SK-N-SH (cell line): ENCODE measurements at regions of chr6 and their contacts with region 1.

Region 1: GRCh38 chr6:158213925-158214674 is 46.0 kb downstream of the GTF2H5 start:
- DNase-seq: peak; percentile 80
- H3K4me3 ChIP-seq: no peak overlapping the region; a peak in 1 of 4 replicates
- H3K27ac ChIP-seq: 0 out of 4 replicates have a peak overlapping the region, but pooled peaks of 1 of the 2 experiments have one; percentile 2
- H3K4me1 ChIP-seq: 0 out of 4 replicates have a peak, but pooled peaks cover 0 to 5% of the 10 kb centered on the region in 2 experiments
- H3K27me3 ChIP-seq: no peaks in the 10 kb centered on the region
- CTCF ChIP-seq: peak; percentile 80
- EP300 ChIP-seq: no peak
- RAD21 ChIP-seq: peak; percentile 91

Region 2: DNA sequence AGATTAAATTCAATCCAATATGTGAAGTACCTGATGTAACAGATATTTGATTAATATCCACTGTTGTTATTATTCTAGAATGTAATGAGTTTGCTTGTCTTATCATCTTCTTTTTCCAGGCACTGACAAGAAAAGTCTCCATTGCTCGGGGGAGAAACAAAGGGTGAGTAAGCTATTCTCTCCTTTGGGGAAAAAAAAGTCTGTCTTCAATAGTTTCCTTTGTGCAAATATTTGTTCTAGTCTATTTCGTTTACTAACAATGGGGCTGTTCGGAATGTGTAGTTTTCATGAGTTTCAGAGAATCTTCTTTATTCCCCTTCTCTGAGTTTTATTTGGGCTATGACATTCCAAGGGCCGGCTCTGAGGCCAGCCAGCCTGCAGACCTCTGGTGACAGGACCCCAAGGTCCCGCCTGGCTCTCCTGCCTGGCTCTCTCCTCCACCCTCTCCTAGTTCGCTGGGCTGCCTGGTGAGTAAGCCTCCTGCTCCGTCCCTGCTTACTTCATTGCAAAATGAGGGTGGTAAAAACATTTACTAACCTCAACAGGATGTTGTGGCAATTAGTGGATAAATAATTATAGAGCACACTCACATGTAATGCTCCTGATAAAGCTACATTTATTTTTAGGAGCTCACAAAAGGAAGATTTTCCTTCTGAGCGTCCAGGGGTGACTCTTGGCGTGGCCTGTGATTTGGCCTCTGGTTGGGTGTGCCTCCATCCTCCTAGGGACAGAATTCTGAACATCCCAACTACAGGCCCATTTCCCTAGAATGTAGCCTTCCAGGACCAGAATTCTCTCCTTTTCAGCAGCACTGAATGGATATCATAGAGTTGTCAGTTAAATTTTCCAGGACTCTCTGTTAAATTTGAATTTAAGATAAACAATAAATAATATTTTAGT is 434.1 kb before region 1 on chr6:
- CTCF ChIA-PET with region 1: no interaction called
- POLR2A ChIA-PET with region 1: no interaction called
- DNase-seq: no peak
- H3K4me3 ChIP-seq: no peak overlapping the region
- H3K27ac ChIP-seq: no peak overlapping the region
- H3K4me1 ChIP-seq: no peaks in the 10 kb centered on the region
- H3K27me3 ChIP-seq: no peaks in the 10 kb centered on the region
- CTCF ChIP-seq: no peak
- EP300 ChIP-seq: no peak
- RAD21 ChIP-seq: no peak

Region 3: GRCh38 chr6:158188591-158188990 is 25.5 kb before region 1 on chr6:
- CTCF ChIA-PET with region 1: interaction called, 14 read pairs
- POLR2A ChIA-PET with region 1: no interaction called
- DNase-seq: no peak
- H3K4me3 ChIP-seq: no peak overlapping the region
- H3K27ac ChIP-seq: no peak overlapping the region
- H3K4me1 ChIP-seq: no peaks in the 10 kb centered on the region
- H3K27me3 ChIP-seq: no peaks in the 10 kb centered on the region
- CTCF ChIP-seq: no peak
- EP300 ChIP-seq: no peak
- RAD21 ChIP-seq: no peak

Region 4: GRCh38 chr6:158198461-158198860 is 15.6 kb before region 1 on chr6:
- CTCF ChIA-PET with region 1: interaction called, 12 read pairs
- POLR2A ChIA-PET with region 1: no interaction called
- DNase-seq: no peak
- H3K4me3 ChIP-seq: no peak overlapping the region
- H3K27ac ChIP-seq: no peak overlapping the region
- H3K4me1 ChIP-seq: no peaks in the 10 kb centered on the region
- H3K27me3 ChIP-seq: no peaks in the 10 kb centered on the region
- CTCF ChIP-seq: no peak
- EP300 ChIP-seq: no peak
- RAD21 ChIP-seq: no peak

Region 5: DNA sequence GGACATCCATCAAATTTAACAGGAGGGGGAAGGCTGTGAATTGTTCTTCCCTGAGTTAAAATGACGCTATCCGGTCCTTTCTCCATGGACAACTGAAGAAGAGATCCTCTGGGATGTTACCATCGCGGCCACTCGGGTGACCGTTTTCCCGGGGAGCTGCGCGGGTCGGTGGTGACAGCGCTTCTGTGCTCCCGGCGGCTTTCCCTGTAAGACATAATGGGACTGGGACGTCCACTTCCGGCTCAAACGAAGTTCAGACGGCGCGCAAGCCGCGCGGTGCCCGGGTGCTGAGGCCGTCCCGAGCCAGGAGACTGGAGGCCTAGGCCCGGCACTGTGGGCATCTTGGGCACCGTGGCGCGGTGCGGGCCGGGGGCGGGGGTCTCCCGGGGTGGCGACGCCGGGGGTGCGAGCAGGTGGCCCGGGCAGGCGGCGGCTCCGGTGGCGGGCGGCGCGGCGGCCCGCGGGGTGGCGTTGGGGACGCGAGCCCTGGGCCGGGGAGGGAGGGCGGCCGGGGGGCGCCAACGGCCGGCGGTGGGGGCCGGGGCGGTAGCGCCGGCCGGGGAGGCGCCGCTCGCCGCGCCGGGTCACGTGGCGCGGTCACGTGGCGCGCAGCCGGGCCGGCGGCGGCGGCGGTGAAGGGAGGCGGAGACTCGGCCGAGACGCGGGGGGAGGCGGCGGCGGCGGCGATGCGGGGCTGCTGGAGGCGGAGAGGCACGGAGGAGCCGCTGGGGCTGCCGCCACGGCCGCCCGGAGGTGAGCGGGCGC is 17.6 kb after region 1 on chr6:
- CTCF ChIA-PET with region 1: interaction called, 22 read pairs
- POLR2A ChIA-PET with region 1: no interaction called
- DNase-seq: peak; percentile 97
- H3K4me3 ChIP-seq: peak overlapping the region; percentile 60 to 69
- H3K27ac ChIP-seq: peak overlapping the region; percentile 86 to 89
- H3K4me1 ChIP-seq: peaks cover 14 to 15% of the 10 kb centered on the region in 2 experiments; a peak in 3 of 4 replicates
- H3K27me3 ChIP-seq: no peaks in the 10 kb centered on the region
- CTCF ChIP-seq: no peak
- EP300 ChIP-seq: no peak
- RAD21 ChIP-seq: no peak

Region 6: GRCh38 chr6:158518191-158519127 is 304.4 kb after region 1 on chr6:
- CTCF ChIA-PET with region 1: interaction called, 13 read pairs
- POLR2A ChIA-PET with region 1: no interaction called
- DNase-seq: peak; percentile 83
- H3K4me3 ChIP-seq: peak overlapping the region; percentile 38 to 67
- H3K27ac ChIP-seq: peak overlapping the region; percentile 58 to 72
- H3K4me1 ChIP-seq: peaks cover 5 to 12% of the 10 kb centered on the region in 2 experiments; a peak in 3 of 4 replicates
- H3K27me3 ChIP-seq: no peaks in the 10 kb centered on the region
- CTCF ChIP-seq: peak; percentile 77
- EP300 ChIP-seq: no peak
- RAD21 ChIP-seq: peak; percentile 74

Region 7: GRCh38 chr6:158605266-158605878 is 391.3 kb after region 1 on chr6:
- CTCF ChIA-PET with region 1: interaction called, 28 read pairs
- POLR2A ChIA-PET with region 1: no interaction called
- DNase-seq: peak; percentile 85
- H3K4me3 ChIP-seq: no peak overlapping the region
- H3K27ac ChIP-seq: no peak overlapping the region
- H3K4me1 ChIP-seq: peaks cover 0 to 15% of the 10 kb centered on the region in 2 experiments; a peak in 2 of 4 replicates
- H3K27me3 ChIP-seq: no peaks in the 10 kb centered on the region
- CTCF ChIP-seq: peak; percentile 74
- EP300 ChIP-seq: no peak
- RAD21 ChIP-seq: peak; percentile 79